ENCODE measurements at regions of chr6 and their contacts with region 1.

Region 1: DNA sequence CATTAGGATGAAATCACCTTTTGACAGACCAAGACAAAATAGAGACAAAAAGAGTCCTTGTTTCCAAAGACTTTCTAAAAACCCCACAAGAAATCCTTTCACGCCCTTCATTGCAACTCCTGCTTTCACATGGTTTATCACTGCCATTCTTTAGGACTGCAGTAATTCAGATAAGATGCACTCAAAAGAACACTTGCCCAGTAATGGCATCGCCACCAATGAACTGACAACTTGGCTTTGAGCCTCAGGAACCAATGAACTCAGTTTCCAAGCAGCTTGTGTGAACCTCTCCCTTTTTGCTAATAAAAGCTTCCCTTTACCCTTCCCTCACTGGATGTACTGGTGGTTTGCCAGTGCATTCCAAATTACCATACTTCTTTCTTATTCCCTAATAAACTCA is 21.8 kb downstream of the OSTM1 start:
- DNase-seq: no peak
- ATAC-seq: no peak
- H3K4me3 ChIP-seq: no peak overlapping the region
- H3K27ac ChIP-seq: no peak overlapping the region
- H3K4me1 ChIP-seq: peaks cover 0 to 3% (median 0%) of the 10 kb centered on the region in 12 donors
- H3K27me3 ChIP-seq: no peaks in the 10 kb centered on the region
- CTCF ChIP-seq: no peak
- POLR2A ChIP-seq: no peak

Region 2: GRCh38 chr6:107982486-107982885 is 70.2 kb before region 1 on chr6:
- intact Hi-C with region 1: loop called in 3 of 10 experiments (anchors 5 to 10 kb)
- DNase-seq: no peak
- ATAC-seq: no peak
- H3K4me3 ChIP-seq: no peak overlapping the region
- H3K27ac ChIP-seq: no peak overlapping the region
- H3K4me1 ChIP-seq: no peaks in the 10 kb centered on the region
- H3K27me3 ChIP-seq: no peaks in the 10 kb centered on the region
- CTCF ChIP-seq: no peak
- POLR2A ChIP-seq: no peak

Measured in heart left ventricle (tissue), 16 donors.